T-cell (primary cell): ENCODE measurements at regions of chr13 and their contacts with region 1.

Region 1: DNA sequence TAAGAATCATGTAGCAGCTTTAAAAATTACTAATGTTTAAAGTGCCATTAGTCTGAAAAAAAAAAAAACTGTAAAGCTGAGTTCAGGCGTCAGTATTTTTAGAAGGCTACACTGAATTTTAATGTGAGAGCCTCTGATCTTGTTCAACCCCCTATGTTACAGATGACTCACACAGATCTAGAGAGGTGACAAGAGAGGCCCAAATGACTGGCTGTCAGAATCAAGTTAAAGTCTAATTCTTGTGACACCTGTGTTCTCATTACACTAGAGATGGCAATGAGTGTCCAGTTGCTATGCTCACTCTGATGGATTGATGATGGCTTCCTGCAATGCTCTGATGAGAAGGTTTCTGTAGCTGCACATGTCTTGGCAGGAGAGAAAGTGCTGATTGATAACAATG is 203.5 kb upstream of the OBI1 start:
- DNase-seq: no peak
- ATAC-seq: no peak
- H3K4me3 ChIP-seq: no peak overlapping the region
- H3K4me3 Mint-ChIP-seq: no peak overlapping the region
- H3K27ac ChIP-seq: no peak overlapping the region
- H3K27ac Mint-ChIP-seq: no peak overlapping the region
- H3K4me1 ChIP-seq: no peaks in the 10 kb centered on the region
- H3K4me1 Mint-ChIP-seq: no peaks in the 10 kb centered on the region
- H3K27me3 ChIP-seq: no peaks in the 10 kb centered on the region
- H3K27me3 Mint-ChIP-seq: peaks cover 2 to 5% of the 10 kb centered on the region in 2 donors

Region 2: DNA sequence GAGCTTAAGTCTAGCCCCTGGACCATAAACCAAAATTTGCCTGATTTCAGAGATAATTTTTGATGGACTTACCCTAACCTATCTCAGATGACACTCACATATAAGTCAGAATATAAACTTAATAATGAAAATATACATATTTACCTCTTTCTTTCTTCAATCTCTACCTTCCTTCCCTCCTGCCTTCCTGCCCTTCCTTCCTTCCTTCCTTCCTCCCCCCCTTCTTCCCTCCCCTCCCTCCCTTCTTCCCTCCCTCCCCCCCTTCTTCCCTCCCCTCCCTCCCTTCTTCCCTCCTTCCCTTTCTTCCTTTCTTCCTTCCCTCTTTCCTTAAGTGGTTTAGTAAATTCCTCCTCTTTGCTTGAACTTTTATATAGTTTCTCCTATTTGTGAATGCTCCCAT is 1032.5 kb before region 1 on chr13:
- CTCF ChIA-PET with region 1: no interaction called
- POLR2A ChIA-PET with region 1: interaction called in 1 of 2 experiments, 15 read pairs
- DNase-seq: no peak
- ATAC-seq: no peak
- H3K4me3 ChIP-seq: no peak overlapping the region
- H3K4me3 Mint-ChIP-seq: no peak overlapping the region
- H3K27ac ChIP-seq: no peak overlapping the region
- H3K27ac Mint-ChIP-seq: no peak overlapping the region
- H3K4me1 ChIP-seq: no peaks in the 10 kb centered on the region
- H3K4me1 Mint-ChIP-seq: no peaks in the 10 kb centered on the region
- H3K27me3 ChIP-seq: no peaks in the 10 kb centered on the region
- H3K27me3 Mint-ChIP-seq: peaks cover 0 to 3% of the 10 kb centered on the region in 2 donors